Dorsolateral prefrontal cortex (tissue), 120 donors: ENCODE measurements at regions of chr13 and their contacts with region 1.

Region 1: DNA sequence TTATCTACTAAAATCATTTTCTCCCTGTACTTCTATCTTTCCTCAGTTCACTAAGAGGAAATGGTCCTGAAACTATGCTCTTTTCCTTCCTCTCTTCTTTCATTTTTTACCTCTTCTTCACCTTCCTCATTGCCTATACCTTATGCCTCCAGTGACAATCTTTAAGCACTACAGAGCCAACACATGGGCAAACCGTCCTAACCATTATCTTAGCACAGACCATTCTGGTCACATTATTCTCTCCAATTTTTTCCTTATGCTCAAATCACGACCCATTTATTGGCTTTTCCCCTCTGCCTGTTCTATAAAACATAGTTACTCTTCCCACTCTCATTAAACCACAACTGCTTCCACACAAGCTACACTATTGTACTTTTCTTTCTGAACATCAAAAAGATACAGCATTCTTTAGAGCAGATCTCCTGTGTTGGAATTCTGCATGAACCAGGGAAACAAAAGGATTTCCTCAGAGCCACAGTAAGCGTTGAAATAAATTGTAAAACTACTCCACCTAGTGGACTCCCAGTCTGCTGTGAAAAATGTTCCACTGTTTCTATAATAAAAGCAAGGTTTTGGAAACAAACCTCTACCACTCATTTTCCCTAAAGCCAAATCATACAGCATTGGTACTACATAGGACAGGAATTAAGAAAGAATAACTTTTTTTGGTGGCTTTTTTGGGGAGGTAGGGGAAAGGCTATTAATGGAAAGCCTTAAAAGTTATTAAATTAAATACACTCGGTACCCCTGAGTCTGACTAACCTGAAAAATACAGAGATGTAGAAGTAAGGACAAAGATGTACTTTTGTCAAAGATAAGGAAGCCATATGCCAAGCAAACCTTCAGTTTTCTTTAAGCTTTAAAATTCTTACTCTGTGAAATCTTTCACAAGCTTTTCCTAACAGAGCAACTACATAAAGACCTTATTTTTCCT is 19.5 kb downstream of the NUFIP1 start:
- DNase-seq: peak in 1 of 10 donors; percentile 12
- H3K4me3 ChIP-seq: peak overlapping the region in 1 of 59 donors; percentile 4
- H3K27ac ChIP-seq: peak overlapping the region in 37 of 59 donors; percentile 3 to 83 (median 42)
- H3K27me3 ChIP-seq: no peaks in the 10 kb centered on the region
- CTCF ChIP-seq: peak; percentile 71 to 97 (median 92)

Region 2: DNA sequence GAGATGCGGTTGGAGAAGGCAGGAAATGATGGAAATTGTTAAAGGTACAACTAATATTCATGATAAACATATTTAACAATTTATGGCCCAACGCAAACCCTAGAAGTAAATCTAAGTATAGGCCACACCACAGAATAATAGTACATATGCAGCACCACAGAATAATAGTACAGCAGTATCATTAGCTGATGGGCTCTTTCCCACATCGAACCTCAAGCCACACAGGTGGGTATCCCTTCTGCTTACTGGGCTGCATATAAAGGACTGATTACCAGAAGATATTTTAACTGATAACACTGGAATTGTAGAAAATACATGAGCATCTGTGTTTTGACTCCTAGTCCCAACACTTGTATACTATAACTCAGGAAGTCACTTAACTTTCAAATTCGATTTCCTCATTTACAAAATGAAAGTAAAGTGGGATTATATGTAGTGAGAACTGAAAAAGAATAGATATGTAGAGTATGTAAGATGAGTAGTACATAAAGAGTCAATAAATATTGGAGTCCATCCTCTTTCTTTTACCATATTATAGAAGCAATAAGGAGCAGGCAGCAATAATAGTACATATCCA is 485.2 kb before region 1 on chr13:
- intact Hi-C with region 1: loop called (anchors 2 to 5 kb)
- DNase-seq: no peak
- H3K4me3 ChIP-seq: peak overlapping the region in 6 of 59 donors; percentile 2 to 28 (median 7)
- H3K27ac ChIP-seq: no peak overlapping the region
- H3K27me3 ChIP-seq: no peaks in the 10 kb centered on the region
- CTCF ChIP-seq: no peak

Region 3: GRCh38 chr13:44917589-44918325 is 52.1 kb before region 1 on chr13:
- intact Hi-C with region 1: loop called (anchors 5 kb)
- DNase-seq: peak; percentile 90 to 97 (median 96)
- H3K4me3 ChIP-seq: peak overlapping the region; percentile 52 to 87 (median 68)
- H3K27ac ChIP-seq: peak overlapping the region; percentile 89 to 100 (median 99)
- H3K27me3 ChIP-seq: no peaks in the 10 kb centered on the region
- CTCF ChIP-seq: peak in 31 of 56 donors; percentile 10 to 61 (median 32)

Region 4: GRCh38 chr13:45305079-45305478 is 335.3 kb after region 1 on chr13:
- intact Hi-C with region 1: loop called (anchors 2 to 5 kb)
- DNase-seq: no peak
- H3K4me3 ChIP-seq: no peak overlapping the region
- H3K27ac ChIP-seq: no peak overlapping the region
- H3K27me3 ChIP-seq: peaks cover 0 to 4% (median 0%) of the 10 kb centered on the region in 45 donors
- CTCF ChIP-seq: no peak